ENCODE measurements at regions of chr3 and their contacts with region 1.

Region 1: DNA sequence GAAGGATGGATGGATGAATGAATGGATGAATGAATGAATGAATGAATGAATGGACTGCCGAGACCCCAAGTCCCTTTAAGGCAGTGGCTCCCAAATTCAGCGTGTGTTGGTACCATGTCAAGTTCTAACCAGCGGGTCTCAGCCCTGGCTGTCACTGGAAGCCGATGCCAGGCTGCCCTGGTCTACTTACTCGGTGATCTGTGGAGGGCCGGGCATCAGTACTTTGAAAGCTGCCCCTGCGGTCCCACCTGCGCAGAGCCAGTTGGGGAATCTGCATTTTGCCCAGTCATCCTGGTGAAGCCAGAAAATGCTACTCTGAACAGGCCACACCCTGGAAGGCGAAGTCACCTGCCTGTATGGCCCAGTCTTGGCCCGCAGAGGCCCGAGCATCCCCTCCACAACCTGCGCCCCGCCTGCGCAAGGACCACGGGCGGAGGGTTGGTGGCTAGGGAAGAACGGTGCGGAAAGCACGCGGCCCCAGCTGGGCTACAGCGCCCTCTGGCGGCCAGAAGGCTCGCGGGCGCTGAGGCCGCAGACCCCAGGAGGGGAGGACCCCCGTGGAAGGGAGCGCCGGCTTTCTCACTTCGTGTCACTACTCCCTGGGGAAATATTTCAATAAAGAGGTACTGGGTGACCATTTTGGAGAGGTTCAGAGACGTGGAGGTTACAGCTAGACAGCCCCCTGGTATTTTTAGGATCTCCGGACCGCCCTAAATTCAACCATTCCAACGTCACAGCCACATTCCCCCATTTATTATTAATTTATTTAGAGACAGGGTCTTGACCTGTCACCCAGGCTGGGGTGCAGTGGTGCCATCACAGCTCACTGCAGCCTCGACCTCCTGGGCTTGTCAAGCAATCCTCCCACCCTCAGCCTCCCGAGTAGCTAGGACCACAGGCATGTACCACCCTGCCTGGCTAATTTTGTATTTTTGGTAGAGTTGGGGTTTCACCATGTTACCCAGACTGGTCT is 34.9 kb downstream of the PRKCD start:
- DNase-seq: no peak
- H3K4me3 ChIP-seq: no peak overlapping the region
- H3K27ac ChIP-seq: no peak overlapping the region
- H3K4me1 ChIP-seq: peaks cover 0 to 28% (median 27%) of the 10 kb centered on the region in 4 donors
- H3K27me3 ChIP-seq: no peaks in the 10 kb centered on the region
- CTCF ChIP-seq: peak; percentile 93 to 99 (median 96)
- EP300 ChIP-seq: no peak
- POLR2A ChIP-seq: no peak

Region 2: GRCh38 chr3:53114011-53114400 is 81.9 kb before region 1 on chr3:
- intact Hi-C with region 1: loop called (anchors 1 kb)
- DNase-seq: peak; percentile 92
- H3K4me3 ChIP-seq: no peak overlapping the region
- H3K27ac ChIP-seq: peak overlapping the region; percentile 37 to 82 (median 79)
- H3K4me1 ChIP-seq: peaks cover 0 to 50% (median 43%) of the 10 kb centered on the region in 4 donors
- H3K27me3 ChIP-seq: no peaks in the 10 kb centered on the region
- CTCF ChIP-seq: peak; percentile 92 to 99 (median 94)
- EP300 ChIP-seq: no peak
- POLR2A ChIP-seq: no peak

Region 3: GRCh38 chr3:53130179-53131061 is 65.5 kb before region 1 on chr3 and contains the start of gene RFT1:
- intact Hi-C with region 1: loop called (anchors 2 kb)
- DNase-seq: peak; percentile 99
- H3K4me3 ChIP-seq: peak within 1 kb of the TSS; percentile 69 to 82 (median 82)
- H3K27ac ChIP-seq: peak within 1 kb of the TSS; percentile 84 to 91 (median 90)
- H3K4me1 ChIP-seq: peaks cover 0 to 22% (median 18%) of the 10 kb centered on the region in 4 donors
- H3K27me3 ChIP-seq: no peaks in the 10 kb centered on the region
- CTCF ChIP-seq: no peak
- EP300 ChIP-seq: no peak
- POLR2A ChIP-seq: peak; percentile 52 to 59
- total RNA-seq, gene RFT1: 4.3 to 8.1 (median 6.9) TPM

Region 4: DNA sequence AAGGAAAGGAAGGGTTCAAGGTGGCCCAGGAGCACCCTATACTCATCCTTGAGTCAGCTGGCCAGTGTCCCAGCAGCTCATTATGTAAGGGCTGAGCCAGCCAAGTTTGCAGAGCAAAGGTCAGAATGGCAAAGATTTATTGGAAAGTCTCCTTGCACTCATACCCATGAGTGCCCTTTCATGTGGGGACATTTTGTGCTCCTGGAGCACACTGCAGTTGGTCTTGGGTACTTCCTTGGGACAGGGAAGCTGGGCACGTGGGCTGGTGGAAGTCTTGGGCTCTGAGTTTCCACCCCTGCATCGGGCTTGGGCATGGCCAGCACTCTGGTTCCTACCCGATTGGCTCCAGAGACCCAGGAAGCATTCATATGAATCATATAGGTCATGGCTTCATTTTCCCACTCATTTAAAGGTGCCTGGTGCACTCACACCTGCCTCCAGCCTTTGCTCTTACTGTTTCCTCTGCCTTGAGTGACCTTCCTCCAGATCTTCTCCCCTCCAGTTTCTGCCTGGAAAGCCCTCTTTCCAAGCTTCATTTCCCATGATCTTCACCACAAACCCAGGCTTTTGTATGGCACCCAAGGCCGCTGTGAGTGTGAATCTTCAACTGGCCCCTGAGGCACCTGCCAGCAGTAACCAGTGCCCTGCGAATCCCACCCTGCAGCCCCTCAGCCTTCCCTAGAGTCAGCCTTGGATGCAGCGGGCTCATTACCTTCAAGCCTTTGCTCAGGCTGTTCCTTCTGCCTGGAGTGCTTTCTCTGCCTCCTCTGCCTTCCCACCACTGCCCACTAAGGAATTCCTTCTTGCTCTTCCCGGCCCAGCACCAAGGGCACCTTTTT is 45.4 kb before region 1 on chr3:
- intact Hi-C with region 1: no loop called
- DNase-seq: no peak
- H3K4me3 ChIP-seq: no peak overlapping the region
- H3K27ac ChIP-seq: no peak overlapping the region
- H3K4me1 ChIP-seq: no peaks in the 10 kb centered on the region
- H3K27me3 ChIP-seq: peaks cover 0 to 10% (median 0%) of the 10 kb centered on the region in 3 donors
- CTCF ChIP-seq: no peak
- EP300 ChIP-seq: no peak
- POLR2A ChIP-seq: no peak

Region 5: DNA sequence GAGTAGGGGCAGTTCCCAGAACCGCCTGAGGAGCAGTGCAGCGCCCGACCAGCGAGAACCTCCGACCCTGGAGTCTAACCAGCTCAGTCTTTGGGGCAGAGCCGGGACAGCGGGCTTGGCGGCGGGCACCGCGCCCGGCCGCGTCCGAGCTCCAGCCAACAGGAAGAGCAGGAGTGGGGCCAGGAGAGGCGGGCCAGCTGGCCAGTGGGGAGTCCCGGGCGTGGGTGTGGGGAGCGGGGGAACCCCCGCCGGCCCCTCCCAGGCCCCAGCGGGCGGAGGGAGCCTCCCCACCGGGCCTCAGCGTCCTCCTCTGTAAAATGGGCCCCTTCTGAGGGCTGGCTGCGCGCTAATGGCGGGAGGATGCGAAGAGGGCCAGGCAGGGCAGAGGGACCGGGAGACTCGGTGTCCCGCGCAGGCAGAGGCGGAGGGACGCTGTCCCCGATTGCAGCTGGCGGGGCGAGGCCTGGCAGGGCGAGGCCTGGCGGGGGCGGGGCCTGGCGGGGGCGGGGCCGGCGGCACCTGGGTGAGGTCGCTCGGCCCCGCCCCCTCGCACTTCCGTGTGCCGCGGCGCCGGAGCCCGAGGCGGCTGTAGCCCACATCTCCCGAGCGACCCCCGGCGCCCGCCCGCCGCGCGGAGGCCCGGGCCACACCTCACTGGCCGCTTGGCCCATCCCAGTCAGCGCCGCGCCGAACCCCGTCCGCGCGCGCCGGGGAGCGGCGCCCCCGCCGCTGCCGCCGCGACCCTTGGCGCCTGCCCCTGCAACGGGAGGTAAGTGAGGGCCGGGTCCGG is 35.0 kb before region 1 on chr3 and contains the start of gene PRKCD:
- intact Hi-C with region 1: loop called (anchors 2 kb)
- DNase-seq: peak; percentile 93
- H3K4me3 ChIP-seq: peak within 1 kb of the TSS; percentile 57 to 97 (median 70)
- H3K27ac ChIP-seq: peak within 1 kb of the TSS; percentile 69 to 86 (median 80)
- H3K4me1 ChIP-seq: peaks cover 0 to 38% (median 20%) of the 10 kb centered on the region in 4 donors
- H3K27me3 ChIP-seq: peaks cover 0 to 7% (median 0%) of the 10 kb centered on the region in 3 donors
- CTCF ChIP-seq: peak in 3 of 4 experiments; percentile 45 to 71 (median 60)
- EP300 ChIP-seq: no peak
- POLR2A ChIP-seq: no peak
- total RNA-seq, gene PRKCD: 3.5 to 12.1 (median 10.5) TPM

Region 6: DNA sequence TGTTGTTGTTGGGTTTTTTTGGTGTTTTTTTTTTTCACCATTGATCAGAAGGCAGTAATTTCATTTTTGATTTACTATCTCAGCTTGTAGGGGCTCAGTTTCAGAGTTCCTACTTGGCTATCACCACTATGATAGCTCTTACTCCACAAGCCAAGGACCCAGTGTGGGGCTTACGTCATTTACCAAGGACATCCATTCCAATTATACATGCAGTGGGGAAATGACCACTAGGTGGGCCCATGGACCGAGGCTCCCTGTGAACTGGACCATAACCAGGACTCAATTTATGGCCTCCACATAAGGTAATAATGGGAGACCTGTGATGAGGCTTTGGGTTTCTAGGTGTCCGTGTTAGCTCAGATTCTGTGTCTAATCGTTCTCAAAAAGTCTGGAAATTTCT is 231.0 kb after region 1 on chr3:
- intact Hi-C with region 1: no loop called
- DNase-seq: no peak
- H3K4me3 ChIP-seq: no peak overlapping the region
- H3K27ac ChIP-seq: no peak overlapping the region
- H3K4me1 ChIP-seq: no peaks in the 10 kb centered on the region
- H3K27me3 ChIP-seq: no peaks in the 10 kb centered on the region
- CTCF ChIP-seq: no peak
- EP300 ChIP-seq: no peak
- POLR2A ChIP-seq: no peak